SK-N-SH (cell line): ENCODE measurements at regions of chr6 and their contacts with region 1.

Region 1: DNA sequence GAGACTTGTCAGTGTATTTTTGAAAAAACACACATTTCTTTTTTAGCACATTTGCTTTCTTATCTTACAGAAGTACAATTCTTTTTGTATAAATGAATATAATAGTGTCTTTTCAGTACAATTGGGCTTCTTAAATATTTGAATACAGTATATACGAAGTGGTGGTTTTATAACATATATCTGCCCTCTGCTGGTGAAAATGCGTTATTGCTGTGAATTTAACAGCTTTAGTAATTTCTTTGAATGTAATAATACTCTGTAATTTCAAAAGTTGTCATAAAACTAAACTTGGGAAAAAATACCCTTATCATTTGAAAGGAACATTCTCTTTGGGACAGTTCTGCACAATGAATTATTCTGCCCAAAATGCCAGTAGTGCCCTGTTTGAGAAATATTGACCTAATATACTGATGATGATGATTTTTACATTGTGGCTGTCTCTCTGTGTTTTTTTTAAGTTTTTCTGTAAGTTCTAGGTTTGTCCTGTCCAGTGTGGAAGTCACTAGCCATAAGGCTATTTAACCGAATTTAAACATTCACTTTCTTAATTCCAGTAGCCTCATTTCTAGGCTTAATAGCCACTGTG is 19.0 kb downstream of the SMAP1 start:
- DNase-seq: peak; percentile 24
- H3K4me3 ChIP-seq: no peak overlapping the region; a peak in 1 of 4 replicates
- H3K27ac ChIP-seq: no peak overlapping the region
- H3K4me1 ChIP-seq: no peaks in the 10 kb centered on the region
- H3K27me3 ChIP-seq: no peaks in the 10 kb centered on the region
- CTCF ChIP-seq: peak; percentile 88
- EP300 ChIP-seq: no peak
- RAD21 ChIP-seq: peak; percentile 73

Region 2: GRCh38 chr6:70413114-70413991 is 273.3 kb before region 1 on chr6 and contains the start of gene FAM135A:
- CTCF ChIA-PET with region 1: interaction called, 10 read pairs
- POLR2A ChIA-PET with region 1: no interaction called
- DNase-seq: peak; percentile 96
- H3K4me3 ChIP-seq: peak within 1 kb of the TSS; percentile 93 to 95
- H3K27ac ChIP-seq: peak within 1 kb of the TSS; percentile 54 to 76
- H3K4me1 ChIP-seq: peaks cover 0 to 8% of the 10 kb centered on the region in 2 experiments; a peak in 3 of 4 replicates
- H3K27me3 ChIP-seq: no peaks in the 10 kb centered on the region
- CTCF ChIP-seq: no peak
- EP300 ChIP-seq: no peak
- RAD21 ChIP-seq: no peak
- polyA plus RNA-seq, gene FAM135A: 2.6 and 3.4 TPM in 2 replicates

Region 3: DNA sequence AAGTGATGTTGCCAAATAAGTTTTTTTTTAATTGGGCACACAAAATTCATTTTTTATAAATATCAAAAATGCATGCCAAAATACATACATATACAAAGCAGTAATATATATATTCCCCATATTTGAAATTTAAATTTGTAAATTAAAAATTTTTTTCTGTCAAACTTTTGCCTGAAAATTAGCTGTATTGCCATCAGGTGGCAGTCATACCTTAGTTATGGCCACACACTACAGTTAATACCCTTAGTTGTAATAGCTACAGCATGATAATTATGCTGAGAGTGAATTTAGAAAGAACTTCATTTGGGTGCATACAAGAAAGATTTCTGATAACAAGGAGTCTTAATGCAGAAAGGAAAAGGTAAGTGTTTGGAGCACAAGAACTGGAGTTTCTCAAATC is 166.1 kb before region 1 on chr6:
- CTCF ChIA-PET with region 1: interaction called, 23 read pairs
- POLR2A ChIA-PET with region 1: no interaction called
- DNase-seq: peak; percentile 9
- H3K4me3 ChIP-seq: no peak overlapping the region
- H3K27ac ChIP-seq: no peak overlapping the region
- H3K4me1 ChIP-seq: no peaks in the 10 kb centered on the region
- H3K27me3 ChIP-seq: no peaks in the 10 kb centered on the region
- CTCF ChIP-seq: peak; percentile 53
- EP300 ChIP-seq: no peak
- RAD21 ChIP-seq: peak; percentile 71

Region 4: DNA sequence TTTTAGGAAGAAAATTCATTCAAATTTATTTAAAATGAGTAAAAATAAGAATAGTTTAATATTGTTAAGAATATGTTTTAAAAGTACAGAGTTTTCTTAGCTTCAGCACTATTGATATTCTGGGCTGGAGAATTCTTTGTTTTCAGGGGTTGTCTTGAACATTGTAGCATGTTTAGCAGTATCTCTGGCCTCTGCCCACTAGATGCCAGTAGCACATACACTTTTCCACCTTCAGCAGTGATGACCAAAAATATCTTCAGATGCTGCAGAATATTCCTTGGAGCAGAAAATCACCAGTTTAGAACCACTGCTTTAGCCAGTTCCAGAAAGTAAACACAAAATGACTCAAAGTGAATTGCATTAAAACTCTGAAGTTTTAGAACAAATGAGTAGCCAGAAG is 139.3 kb before region 1 on chr6:
- CTCF ChIA-PET with region 1: interaction called, 27 read pairs
- POLR2A ChIA-PET with region 1: no interaction called
- DNase-seq: peak; percentile 13
- H3K4me3 ChIP-seq: no peak overlapping the region
- H3K27ac ChIP-seq: no peak overlapping the region
- H3K4me1 ChIP-seq: no peaks in the 10 kb centered on the region
- H3K27me3 ChIP-seq: no peaks in the 10 kb centered on the region
- CTCF ChIP-seq: peak; percentile 54
- EP300 ChIP-seq: no peak
- RAD21 ChIP-seq: peak; percentile 69

Region 5: DNA sequence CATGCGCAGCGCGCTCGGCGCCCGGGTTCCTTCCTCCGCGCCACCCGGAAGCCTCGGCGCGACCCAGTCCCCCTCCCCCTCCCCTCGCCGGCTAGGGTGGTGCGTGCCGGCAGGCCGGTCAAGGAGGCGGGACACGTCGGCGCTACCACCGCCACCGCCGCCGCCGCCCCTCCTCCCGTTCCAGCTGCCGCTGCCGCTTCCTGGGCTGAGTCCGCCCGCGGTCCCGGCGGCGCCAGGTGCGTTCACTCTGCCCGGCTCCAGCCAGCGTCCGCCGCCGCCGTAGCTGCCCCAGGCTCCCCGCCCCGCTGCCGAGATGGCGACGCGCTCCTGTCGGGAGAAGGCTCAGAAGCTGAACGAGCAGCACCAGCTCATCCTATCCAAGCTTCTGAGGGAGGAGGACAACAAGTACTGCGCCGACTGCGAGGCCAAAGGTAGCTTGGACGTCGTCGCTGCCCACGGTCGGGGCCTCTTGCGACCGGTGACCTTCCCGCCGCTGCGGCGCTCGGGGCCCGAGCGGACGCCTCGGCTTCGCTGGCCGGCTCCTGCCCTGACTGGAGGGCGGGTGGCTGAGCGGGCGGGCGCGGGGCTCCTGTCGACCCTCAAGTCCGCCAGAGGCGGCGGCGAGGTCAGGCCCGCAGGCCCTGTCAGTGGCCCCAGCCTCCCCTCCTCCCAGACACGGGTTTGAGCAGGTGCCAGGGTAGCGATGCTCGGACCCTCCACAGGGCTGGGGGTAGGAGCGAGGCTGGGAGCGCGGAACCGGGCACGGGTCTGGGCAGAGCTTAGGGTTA is 18.7 kb before region 1 on chr6 and contains the start of gene SMAP1:
- CTCF ChIA-PET with region 1: interaction called, 16 read pairs
- POLR2A ChIA-PET with region 1: no interaction called
- DNase-seq: peak; percentile 98
- H3K4me3 ChIP-seq: peak within 1 kb of the TSS; percentile 79 to 93
- H3K27ac ChIP-seq: peak within 1 kb of the TSS; percentile 81 to 95
- H3K4me1 ChIP-seq: peaks cover 4 to 5% of the 10 kb centered on the region in 2 experiments; a peak in 2 of 4 replicates
- H3K27me3 ChIP-seq: no peaks in the 10 kb centered on the region
- CTCF ChIP-seq: no peak
- EP300 ChIP-seq: peak in 1 of 2 experiments; percentile 22; a peak in 1 of 4 replicates
- RAD21 ChIP-seq: no peak
- polyA plus RNA-seq, gene SMAP1: 11.9 and 12.6 TPM in 2 replicates

Region 6: GRCh38 chr6:70673601-70674000 is 13.0 kb before region 1 on chr6:
- CTCF ChIA-PET with region 1: interaction called, 16 read pairs
- POLR2A ChIA-PET with region 1: no interaction called
- DNase-seq: no peak
- H3K4me3 ChIP-seq: no peak overlapping the region
- H3K27ac ChIP-seq: no peak overlapping the region
- H3K4me1 ChIP-seq: peaks cover 4 to 5% of the 10 kb centered on the region in 2 experiments; a peak in 3 of 4 replicates
- H3K27me3 ChIP-seq: no peaks in the 10 kb centered on the region
- CTCF ChIP-seq: no peak
- EP300 ChIP-seq: no peak
- RAD21 ChIP-seq: no peak

Region 7: DNA sequence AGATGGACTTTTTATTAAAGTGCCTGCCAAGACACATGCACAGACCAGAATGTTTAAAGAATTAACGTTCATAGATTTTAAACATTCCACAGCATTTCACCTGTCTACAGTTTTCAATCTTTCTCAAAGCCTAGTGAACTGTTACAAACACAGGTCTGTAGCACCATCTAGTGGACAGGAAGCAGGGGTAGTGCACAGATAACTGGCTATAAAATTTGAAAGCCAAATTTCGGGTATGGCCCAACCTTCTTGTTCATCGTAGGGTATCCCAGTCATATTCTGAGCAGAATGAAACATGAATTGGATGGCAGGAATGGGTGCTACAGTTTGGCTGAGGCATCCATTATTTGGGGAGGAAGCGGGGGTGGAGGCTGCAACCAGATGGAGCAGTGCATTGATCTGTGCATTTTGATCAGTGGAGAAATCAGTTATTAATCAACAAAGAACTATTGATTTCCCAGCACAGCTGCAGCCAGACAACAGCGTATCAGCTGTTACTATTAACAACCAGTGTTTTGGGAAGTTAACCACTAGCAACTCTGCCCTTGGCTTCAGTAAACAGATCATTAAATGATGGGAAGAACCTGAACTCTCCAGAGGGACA is 326.3 kb after region 1 on chr6:
- CTCF ChIA-PET with region 1: interaction called, 11 read pairs
- POLR2A ChIA-PET with region 1: no interaction called
- DNase-seq: peak; percentile 56
- H3K4me3 ChIP-seq: no peak overlapping the region
- H3K27ac ChIP-seq: no peak overlapping the region
- H3K4me1 ChIP-seq: no peaks in the 10 kb centered on the region
- H3K27me3 ChIP-seq: no peaks in the 10 kb centered on the region
- CTCF ChIP-seq: peak; percentile 86
- EP300 ChIP-seq: no peak
- RAD21 ChIP-seq: peak; percentile 90